ENCODE measurements at regions of chr6 and their contacts with region 1.

Region 1: GRCh38 chr6:105402939-105403935 is at the start of gene PREP:
- DNase-seq: peak; percentile 90
- H3K4me3 Mint-ChIP-seq: peak within 1 kb of the TSS; percentile 99
- H3K27ac Mint-ChIP-seq: peak within 1 kb of the TSS; percentile 78
- H3K4me1 Mint-ChIP-seq: peaks cover 38% of the 10 kb centered on the region
- H3K27me3 Mint-ChIP-seq: no peaks in the 10 kb centered on the region
- CTCF ChIP-seq: peak; percentile 78
- total RNA-seq, gene PREP: 62.4 and 70.4 TPM in 2 replicates

Region 2: GRCh38 chr6:105317607-105318533 is 85.4 kb before region 1 on chr6:
- CTCF ChIA-PET with region 1: interaction called, 6 read pairs
- intact Hi-C with region 1: loop called (anchors 1 kb)
- DNase-seq: peak; percentile 46
- H3K4me3 Mint-ChIP-seq: no peak overlapping the region
- H3K27ac Mint-ChIP-seq: no peak overlapping the region
- H3K4me1 Mint-ChIP-seq: no peaks in the 10 kb centered on the region
- H3K27me3 Mint-ChIP-seq: no peaks in the 10 kb centered on the region
- CTCF ChIP-seq: peak; percentile 45

Region 3: DNA sequence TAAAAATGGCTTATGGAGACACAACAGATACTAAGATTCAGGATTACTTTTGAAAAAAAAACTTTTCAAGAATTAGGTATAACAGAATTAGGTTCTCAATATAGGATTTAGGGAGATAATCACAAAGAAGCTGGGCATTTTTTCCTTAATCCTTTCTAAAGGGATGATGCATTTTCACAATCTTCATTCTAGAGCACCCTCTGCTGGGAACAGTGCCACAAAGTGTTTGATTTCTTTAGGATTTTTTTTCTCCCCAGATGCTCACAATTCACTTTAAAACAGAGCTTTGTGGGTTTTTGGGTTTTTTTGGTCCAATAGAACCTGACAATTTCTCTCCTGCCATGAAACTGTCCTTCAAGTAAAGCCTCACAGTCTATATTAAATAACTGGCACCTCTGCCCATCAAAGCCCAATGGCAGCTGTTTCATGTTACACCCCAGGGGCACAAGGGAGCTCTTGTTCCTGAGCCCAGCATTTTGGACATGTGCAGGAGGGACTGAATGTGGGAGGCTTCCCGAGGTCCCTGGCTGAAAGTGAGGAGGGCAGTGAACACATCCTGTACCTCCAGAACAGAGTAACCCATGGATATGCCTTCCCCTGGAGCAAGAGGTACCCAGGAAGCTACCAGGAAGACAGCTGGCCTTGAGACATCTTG is 40.0 kb before region 1 on chr6:
- CTCF ChIA-PET with region 1: interaction called, 4 read pairs
- intact Hi-C with region 1: loop called (anchors 1 kb)
- DNase-seq: no peak
- H3K4me3 Mint-ChIP-seq: no peak overlapping the region
- H3K27ac Mint-ChIP-seq: peak overlapping the region; percentile 73
- H3K4me1 Mint-ChIP-seq: peaks cover 20% of the 10 kb centered on the region
- H3K27me3 Mint-ChIP-seq: no peaks in the 10 kb centered on the region
- CTCF ChIP-seq: peak; percentile 33

Region 4: DNA sequence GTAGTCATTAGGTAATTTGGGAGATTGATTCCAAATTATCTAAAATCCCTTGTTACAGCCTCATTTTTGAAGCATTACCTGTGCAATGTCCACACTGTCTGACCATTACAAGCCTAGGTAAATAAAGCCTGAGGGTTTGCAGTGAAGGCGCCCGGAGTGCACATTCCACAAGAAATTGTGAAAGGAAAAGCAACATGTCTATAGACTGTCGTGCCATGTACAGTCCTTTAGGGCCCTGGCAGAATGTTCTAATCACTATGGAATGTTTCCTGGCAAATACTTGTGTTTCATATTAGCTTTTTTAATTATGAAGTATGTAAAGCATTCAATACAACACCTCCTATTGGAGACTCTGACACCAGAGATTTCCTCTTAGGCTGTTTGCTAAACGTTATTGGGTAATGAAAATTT is 29.2 kb before region 1 on chr6:
- CTCF ChIA-PET with region 1: interaction called, 7 read pairs
- intact Hi-C with region 1: loop called (anchors 1 kb)
- DNase-seq: peak; percentile 62
- H3K4me3 Mint-ChIP-seq: no peak overlapping the region
- H3K27ac Mint-ChIP-seq: peak overlapping the region; percentile 92
- H3K4me1 Mint-ChIP-seq: peaks cover 55% of the 10 kb centered on the region
- H3K27me3 Mint-ChIP-seq: no peaks in the 10 kb centered on the region
- CTCF ChIP-seq: no peak